ENCODE measurements at regions of chr2 and their contacts with region 1.

Region 1: GRCh38 chr2:169109502-169110409 is 40.4 kb downstream of the DHRS9 start:
- DNase-seq: peak; percentile 83
- ATAC-seq: peak; percentile 95

Region 2: GRCh38 chr2:168939918-168940317 is 169.8 kb before region 1 on chr2:
- intact Hi-C with region 1: no loop called
- DNase-seq: no peak
- ATAC-seq: no peak

Region 3: GRCh38 chr2:168961450-168962229 is 148.1 kb before region 1 on chr2:
- intact Hi-C with region 1: no loop called
- DNase-seq: no peak
- ATAC-seq: peak; percentile 94

Region 4: DNA sequence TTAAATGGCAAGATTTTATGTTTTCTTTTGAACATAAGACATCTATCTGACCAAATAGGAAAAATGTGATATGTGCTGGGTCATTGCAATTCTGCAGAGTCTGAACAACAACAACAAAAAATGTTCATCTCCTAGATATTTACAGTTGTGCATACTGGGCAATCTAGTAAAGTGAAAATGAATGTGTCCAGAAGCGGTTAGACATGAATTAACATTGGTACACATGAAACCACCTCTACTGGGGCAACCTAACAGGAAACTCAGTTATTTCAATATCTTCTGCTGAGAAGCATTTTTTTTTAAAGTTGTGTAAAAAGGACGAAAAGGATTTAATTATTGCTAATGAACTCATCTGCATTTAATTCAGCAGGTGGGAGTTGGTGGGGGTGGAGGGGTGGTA is 36.5 kb after region 1 on chr2:
- intact Hi-C with region 1: loop called (anchors 5 kb)
- DNase-seq: no peak
- ATAC-seq: no peak

Region 5: DNA sequence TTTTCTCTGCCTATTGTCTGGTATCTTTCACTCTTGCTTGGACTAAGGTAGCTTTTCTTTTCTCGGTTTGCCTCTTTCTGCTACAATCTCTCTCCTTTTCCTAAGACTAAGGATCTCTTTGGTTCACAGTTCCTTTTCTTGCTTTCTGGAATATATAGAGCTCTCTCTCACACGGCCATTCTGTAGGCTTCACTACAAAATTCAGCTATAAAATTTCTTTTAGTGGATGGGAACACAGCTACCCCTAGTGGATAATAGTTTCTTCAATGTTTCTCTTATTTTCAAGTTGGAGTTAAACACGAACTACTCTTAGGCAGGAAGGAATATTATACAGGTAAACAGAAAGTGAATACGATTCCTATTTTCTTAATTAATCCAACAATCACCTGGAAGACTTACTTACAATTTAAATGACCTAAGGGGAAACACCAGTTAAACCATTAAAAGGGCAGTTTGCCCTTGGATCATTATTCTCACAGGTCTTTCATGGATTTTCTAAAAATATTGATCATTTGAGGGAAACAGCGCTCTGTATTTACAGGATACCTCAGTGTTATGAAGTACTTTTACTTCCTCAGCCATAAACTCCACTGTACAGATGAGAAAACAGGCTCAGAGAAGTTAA is 112.1 kb after region 1 on chr2:
- intact Hi-C with region 1: loop called (anchors 10 kb)
- DNase-seq: no peak
- ATAC-seq: no peak

Measured in Right ventricle myocardium superior (tissue), 1 donor.